ENCODE measurements at regions of chr2 and their contacts with region 1.

Region 1: DNA sequence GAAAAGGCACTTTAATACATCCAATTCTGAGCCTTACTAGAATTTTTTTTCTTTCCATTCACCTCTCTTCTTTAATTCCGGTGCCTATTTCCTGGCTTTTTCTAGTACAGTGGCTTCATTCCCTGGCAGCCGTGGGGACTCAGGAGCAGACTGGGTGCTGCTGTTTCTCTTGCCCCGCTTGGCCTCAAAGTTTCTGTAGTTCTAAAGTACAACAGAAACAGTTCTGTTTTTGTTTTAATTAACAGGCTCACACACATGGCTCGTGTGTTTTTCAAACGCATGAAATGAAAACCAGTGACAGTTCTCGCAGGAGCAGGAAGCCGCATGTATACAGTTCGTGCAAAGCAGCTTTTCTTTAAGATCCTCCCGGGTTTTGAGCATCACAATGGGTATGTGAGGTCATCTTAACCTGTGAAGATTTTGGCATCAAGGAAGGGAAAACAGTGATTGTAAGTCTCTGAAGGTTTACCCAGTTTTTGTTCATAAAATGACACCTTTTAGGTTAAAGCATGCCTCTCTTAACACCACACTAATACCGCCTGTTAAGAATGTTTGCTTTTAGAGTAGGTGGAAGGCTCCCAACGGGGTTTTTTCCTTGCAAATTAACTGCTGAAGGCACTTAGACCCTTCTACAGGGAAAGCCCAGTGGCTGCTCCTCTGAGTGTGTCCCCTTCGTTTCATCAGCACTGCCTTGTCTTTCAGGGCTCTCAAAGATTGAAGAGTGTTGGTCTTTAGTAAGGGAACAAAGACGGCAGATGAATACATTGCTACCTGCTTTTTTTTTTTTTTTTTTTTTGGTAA is 5.8 kb downstream of the FZD7 start:
- DNase-seq: no peak
- ATAC-seq: no peak

Region 2: DNA sequence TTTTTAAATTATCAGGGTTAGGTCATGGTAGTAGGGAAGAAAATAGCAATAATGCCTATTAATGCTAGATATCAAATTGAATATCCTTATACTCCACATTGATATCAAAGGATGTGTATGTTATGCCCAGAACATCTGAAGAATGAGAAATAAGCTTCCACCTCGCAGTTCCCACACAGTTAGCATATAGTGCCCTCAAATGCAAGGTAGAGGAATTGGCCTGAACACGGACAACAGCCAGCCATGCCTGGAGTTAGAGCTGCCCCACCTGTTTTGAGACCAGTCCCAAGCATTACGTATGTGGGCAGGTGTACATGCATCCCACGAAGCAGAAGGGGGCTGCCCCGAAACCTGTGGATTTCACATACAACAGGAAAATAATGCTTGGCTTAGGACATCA is 119.3 kb after region 1 on chr2:
- intact Hi-C with region 1: loop called in 1 of 2 experiments (anchors 10 kb)
- DNase-seq: no peak
- ATAC-seq: peak in 1 of 2 donors; percentile 70

Region 3: GRCh38 chr2:202418511-202418910 is 379.0 kb after region 1 on chr2:
- intact Hi-C with region 1: no loop called
- DNase-seq: no peak
- ATAC-seq: no peak